Right lobe of liver (tissue), 6 donors: ENCODE measurements at regions of chr16 and their contacts with region 1.

Region 1: GRCh38 chr16:67428146-67428731 is 2.7 kb upstream of the HSD11B2 start:
- DNase-seq: peak; percentile 75 to 77 (median 77)
- ATAC-seq: peak; percentile 59 to 74 (median 68)
- H3K4me3 ChIP-seq: no peak overlapping the region
- H3K27ac ChIP-seq: no peak overlapping the region
- H3K4me1 ChIP-seq: peaks cover 0 to 34% (median 13%) of the 10 kb centered on the region in 4 donors
- H3K27me3 ChIP-seq: no peaks in the 10 kb centered on the region
- CTCF ChIP-seq: peak; percentile 83 to 94 (median 88)
- POLR2A ChIP-seq: no peak

Region 2: DNA sequence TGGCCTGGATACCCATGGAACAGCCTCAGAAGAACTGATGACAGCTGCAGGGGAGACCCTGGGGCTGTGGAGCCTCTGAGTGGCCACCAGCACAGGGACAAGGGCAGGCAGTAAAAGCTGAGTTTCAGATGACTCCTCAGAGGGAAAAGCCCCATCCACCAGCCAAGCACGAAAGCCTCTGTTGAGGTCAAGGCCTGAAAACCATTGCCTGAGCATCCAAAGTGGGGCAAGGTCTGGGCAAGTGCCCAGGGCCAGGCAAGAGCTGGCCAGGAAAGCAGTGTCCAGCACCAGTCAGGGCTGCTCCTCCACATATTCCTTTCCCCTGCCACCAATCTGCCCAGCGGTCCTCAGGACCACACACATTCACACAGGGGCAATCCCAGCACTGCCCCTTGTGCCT is 36.3 kb after region 1 on chr16:
- intact Hi-C with region 1: loop called in 1 of 2 experiments (anchors 2 kb)
- DNase-seq: peak in 2 of 3 donors; percentile 67 to 70
- ATAC-seq: peak in 3 of 4 donors; percentile 17 to 81 (median 41)
- H3K4me3 ChIP-seq: no peak overlapping the region
- H3K27ac ChIP-seq: no peak overlapping the region
- H3K4me1 ChIP-seq: peaks cover 0 to 31% (median 11%) of the 10 kb centered on the region in 4 donors
- H3K27me3 ChIP-seq: no peaks in the 10 kb centered on the region
- CTCF ChIP-seq: no peak
- POLR2A ChIP-seq: no peak

Region 3: DNA sequence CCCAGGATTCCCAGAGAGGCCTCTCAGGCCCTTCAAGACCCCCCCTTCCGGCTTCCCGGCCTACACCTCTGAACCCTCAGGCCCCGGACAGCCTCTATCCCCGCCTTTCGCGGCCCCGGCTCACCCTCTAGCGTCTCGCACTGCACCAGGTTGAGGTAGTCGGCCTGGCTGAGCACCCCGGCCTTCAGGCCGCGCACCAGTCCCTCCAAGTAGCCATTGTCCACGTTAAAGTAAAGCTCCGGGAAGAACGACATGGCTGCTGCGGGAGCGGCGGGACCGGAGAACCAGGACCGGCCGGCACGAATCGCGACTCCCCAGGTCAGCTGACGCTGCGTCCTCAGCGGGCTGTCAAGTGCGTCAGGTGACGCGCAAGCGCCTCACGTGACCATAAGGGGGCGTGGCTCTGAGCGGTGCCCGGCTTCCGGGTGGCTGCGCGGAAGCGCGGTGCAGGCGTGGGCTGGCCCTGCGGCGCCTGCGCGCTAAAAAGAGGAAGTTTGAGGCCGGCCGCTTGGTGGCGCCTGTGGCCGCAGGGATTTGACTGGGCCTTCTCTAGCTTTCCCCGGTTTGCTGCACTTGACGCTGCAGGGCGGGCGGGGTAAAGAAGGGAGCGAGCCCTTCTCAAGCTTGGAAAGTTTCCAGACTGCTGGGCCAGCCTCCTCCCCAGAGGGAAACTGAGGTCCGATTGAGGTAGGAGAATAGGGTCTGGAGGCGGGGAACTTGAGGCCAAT is 52.8 kb after region 1 on chr16 and contains the start of gene ATP6V0D1:
- intact Hi-C with region 1: loop called in 1 of 2 experiments (anchors 10 kb)
- DNase-seq: peak; percentile 99
- ATAC-seq: peak; percentile 89 to 96 (median 94)
- H3K4me3 ChIP-seq: peak within 1 kb of the TSS; percentile 80 to 98 (median 95)
- H3K27ac ChIP-seq: peak within 1 kb of the TSS; percentile 79 to 86 (median 86)
- H3K4me1 ChIP-seq: peaks cover 0 to 51% (median 20%) of the 10 kb centered on the region in 4 donors
- H3K27me3 ChIP-seq: no peaks in the 10 kb centered on the region
- CTCF ChIP-seq: peak; percentile 90 to 94 (median 91)
- POLR2A ChIP-seq: peak; percentile 77
- total RNA-seq, gene ATP6V0D1: 33.6 to 84.6 (median 47.0) TPM

Region 4: GRCh38 chr16:67546761-67547422 is 118.7 kb after region 1 on chr16:
- intact Hi-C with region 1: no loop called
- DNase-seq: peak; percentile 76 to 91 (median 89)
- ATAC-seq: peak; percentile 87 to 93 (median 89)
- H3K4me3 ChIP-seq: no peak overlapping the region
- H3K27ac ChIP-seq: peak overlapping the region in 2 of 3 donors; percentile 19 to 59
- H3K4me1 ChIP-seq: peaks cover 0 to 18% (median 7%) of the 10 kb centered on the region in 4 donors
- H3K27me3 ChIP-seq: no peaks in the 10 kb centered on the region
- CTCF ChIP-seq: peak; percentile 90 to 98 (median 97)
- POLR2A ChIP-seq: no peak